ENCODE measurements at regions of chr10 and their contacts with region 1.

Region 1: GRCh38 chr10:132347211-132347930 is 15.4 kb downstream of the LRRC27 start:
- DNase-seq: no peak
- ATAC-seq: no peak
- H3K4me3 ChIP-seq: no peak overlapping the region
- H3K27ac ChIP-seq: no peak overlapping the region
- H3K4me1 ChIP-seq: no peaks in the 10 kb centered on the region
- H3K27me3 ChIP-seq: no peaks in the 10 kb centered on the region
- CTCF ChIP-seq: no peak
- POLR2A ChIP-seq: no peak

Region 2: GRCh38 chr10:132223156-132223590 is 124.2 kb before region 1 on chr10:
- in situ Hi-C with region 1: loop called (anchors 5 to 10 kb)
- intact Hi-C with region 1: loop called (anchors 1 kb)
- DNase-seq: peak; percentile 53 to 60
- ATAC-seq: peak; percentile 86 to 94
- H3K4me3 ChIP-seq: no peak overlapping the region
- H3K27ac ChIP-seq: no peak overlapping the region
- H3K4me1 ChIP-seq: no peaks in the 10 kb centered on the region
- H3K27me3 ChIP-seq: no peaks in the 10 kb centered on the region
- CTCF ChIP-seq: peak; percentile 81 to 95 (median 85)
- POLR2A ChIP-seq: no peak

Region 3: GRCh38 chr10:132229834-132230556 is 117.4 kb before region 1 on chr10:
- in situ Hi-C with region 1: loop called (anchors 5 to 10 kb)
- intact Hi-C with region 1: no loop called
- DNase-seq: no peak
- ATAC-seq: no peak
- H3K4me3 ChIP-seq: peak overlapping the region; percentile 28 to 50 (median 41)
- H3K27ac ChIP-seq: peak overlapping the region in 2 of 4 donors; percentile 34 to 43
- H3K4me1 ChIP-seq: no peaks in the 10 kb centered on the region
- H3K27me3 ChIP-seq: no peaks in the 10 kb centered on the region
- CTCF ChIP-seq: no peak
- POLR2A ChIP-seq: no peak

Measured in gastrocnemius medialis (tissue), 4 donors.